Right ventricle myocardium inferior (tissue), 1 donor: ENCODE measurements at regions of chr3 and their contacts with region 1.

Region 1: GRCh38 chr3:25156626-25157025 is 271.4 kb upstream of the RARB start:
- DNase-seq: no peak
- ATAC-seq: peak; percentile 78

Region 2: GRCh38 chr3:25007974-25008658 is 148.5 kb before region 1 on chr3:
- intact Hi-C with region 1: no loop called
- DNase-seq: no peak
- ATAC-seq: peak; percentile 56

Region 3: GRCh38 chr3:25044762-25045710 is 111.6 kb before region 1 on chr3:
- intact Hi-C with region 1: loop called (anchors 10 kb)
- DNase-seq: no peak
- ATAC-seq: peak; percentile 69

Region 4: DNA sequence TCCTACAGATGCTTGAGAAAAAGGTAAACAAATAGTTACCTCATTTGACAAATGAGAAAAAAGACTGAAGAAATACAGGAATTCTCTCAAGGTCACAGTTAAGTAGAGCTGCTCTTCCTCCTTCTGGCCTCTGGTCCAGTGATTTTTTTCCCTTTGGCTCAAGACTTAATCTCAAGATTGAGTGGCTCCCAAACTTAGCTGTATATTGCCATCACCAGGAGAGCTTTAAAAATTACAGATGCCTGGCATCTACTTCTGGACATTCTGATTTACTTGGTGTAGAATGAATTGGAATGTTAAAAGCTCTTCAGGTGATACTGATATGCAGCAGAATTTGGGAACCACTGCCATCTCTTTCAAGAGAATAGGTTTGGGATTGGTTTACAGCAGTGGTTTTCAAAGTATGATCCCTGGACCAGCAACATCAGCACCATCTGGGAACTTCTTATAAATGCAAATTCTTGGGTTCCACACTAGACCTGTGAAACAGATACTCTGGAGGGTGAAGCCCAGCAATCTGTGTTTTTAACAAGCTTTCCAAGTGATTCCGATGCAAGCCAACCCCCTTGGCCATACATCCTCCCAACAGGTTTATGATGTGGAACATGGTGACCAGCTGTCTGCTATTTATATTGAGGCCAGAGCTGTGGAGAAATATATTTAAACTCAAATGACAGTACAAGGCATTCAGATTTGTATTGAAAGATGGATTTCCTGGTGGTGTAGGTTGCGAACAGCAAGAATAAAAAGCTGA is 61.5 kb before region 1 on chr3:
- intact Hi-C with region 1: loop called (anchors 5 kb)
- DNase-seq: no peak
- ATAC-seq: no peak

Region 5: DNA sequence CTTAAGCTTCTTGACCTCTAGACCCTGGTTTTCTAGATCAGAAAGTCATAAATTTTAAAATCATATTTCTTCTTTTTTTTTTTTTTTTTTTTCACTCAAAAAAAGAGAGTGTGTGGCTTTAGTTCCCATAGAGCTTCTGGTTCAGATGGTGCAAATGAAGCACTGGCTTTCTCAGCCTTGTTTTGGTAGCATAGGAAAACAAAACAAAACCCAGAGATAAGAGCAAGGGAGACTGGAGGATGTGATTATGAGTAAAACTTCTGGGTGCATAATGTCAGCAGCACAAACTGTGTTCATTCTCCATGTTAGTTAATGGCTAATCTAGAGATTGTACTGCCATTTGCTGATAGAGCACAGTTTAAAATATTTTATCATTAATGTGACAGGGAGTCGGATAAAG is 326.8 kb after region 1 on chr3:
- intact Hi-C with region 1: no loop called
- DNase-seq: no peak
- ATAC-seq: peak; percentile 44